Adrenal gland (tissue), 19 donors: ENCODE measurements at regions of chr14 and their contacts with region 1.

Region 1: DNA sequence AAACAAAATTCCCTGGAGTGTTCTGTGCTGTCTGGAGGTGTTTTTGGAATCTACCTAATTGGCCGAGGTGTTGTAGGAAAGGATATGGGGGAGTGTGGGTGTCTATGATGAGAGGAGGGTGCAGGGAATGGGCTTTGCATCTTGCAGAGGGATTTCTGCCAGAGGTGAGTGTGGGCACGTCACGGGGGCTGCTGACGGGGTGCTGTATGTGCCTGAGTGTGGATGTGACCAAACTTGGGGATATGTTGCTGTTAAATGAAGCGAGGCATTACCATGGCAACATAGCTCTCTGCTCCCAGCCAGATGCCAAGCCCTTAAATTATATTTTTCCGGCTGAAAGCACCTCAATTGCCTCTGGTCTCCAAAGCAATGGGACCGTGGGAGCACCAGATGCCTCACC is 44.3 kb upstream of the SPTLC2 start:
- DNase-seq: peak in 1 of 7 donors; percentile 35
- H3K4me3 ChIP-seq: no peak overlapping the region
- H3K27ac ChIP-seq: no peak overlapping the region
- H3K4me1 ChIP-seq: peaks cover 0 to 7% of the 10 kb centered on the region in 2 donors
- H3K27me3 ChIP-seq: no peaks in the 10 kb centered on the region
- CTCF ChIP-seq: no peak
- POLR2A ChIP-seq: no peak

Region 2: DNA sequence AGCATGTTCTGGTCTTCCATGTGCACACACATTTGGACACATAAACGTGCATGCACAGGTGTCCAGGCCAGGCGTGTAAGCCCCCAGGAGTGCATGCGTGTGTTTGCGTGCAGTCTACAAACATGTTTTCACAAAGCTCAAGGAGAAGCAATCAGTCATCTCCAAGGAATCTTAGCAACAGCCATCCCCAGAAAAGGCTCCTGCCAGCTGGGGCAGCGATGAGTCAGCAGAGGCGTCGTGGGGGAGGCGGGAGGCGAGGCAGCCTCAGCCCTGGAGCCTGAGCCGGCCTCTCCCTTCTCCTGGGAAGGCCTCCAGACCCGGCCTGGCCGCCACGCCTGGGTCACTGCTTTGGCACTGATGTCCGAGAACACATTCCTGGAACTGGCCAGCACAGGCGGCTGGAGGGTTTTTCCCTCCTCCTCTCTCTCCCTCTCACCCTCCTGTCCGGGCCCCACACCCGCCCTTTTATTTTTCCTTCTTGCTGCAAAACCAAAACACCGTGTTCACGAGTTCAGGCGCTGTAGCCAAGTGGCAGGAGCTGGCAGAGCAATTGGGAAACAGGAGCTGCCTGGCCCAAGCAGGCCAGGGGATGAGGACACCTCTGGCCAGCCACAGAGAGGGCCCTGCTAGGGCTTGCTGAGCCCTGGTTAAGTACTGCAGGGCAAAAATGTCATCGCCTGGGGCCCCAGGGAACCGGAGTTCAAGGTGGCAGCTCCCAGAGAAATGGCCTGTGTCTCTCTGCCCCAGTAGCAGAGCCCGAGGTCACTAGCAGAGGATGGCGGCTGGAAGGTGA is 741.8 kb before region 1 on chr14:
- intact Hi-C with region 1: no loop called
- DNase-seq: peak; percentile 94 to 98 (median 97)
- H3K4me3 ChIP-seq: no peak overlapping the region
- H3K27ac ChIP-seq: peak overlapping the region; percentile 73 to 96 (median 92)
- H3K4me1 ChIP-seq: peaks cover 37 to 63% of the 10 kb centered on the region in 2 donors
- H3K27me3 ChIP-seq: no peaks in the 10 kb centered on the region
- CTCF ChIP-seq: peak in 4 of 6 experiments; percentile 18 to 34 (median 30)
- POLR2A ChIP-seq: peak in 1 of 2 donors; percentile 70

Region 3: DNA sequence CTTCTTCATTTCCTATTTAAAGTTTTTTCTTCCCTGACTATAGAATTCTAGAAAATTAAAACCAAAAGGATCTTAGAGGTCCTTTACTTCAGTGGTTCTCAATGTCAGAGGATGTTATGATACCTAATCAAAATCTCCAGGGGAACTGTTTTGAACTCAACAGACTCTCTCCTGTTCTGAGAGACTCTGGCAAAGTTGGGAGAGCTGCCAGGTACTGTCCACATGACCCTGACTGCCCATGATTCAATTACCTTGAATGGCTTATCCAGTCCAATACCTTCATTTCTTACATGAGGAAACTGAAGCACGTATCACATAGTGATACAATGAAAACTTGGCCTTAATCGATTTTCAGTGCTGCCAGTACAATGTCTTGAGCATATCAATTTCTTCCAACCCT is 30.5 kb after region 1 on chr14:
- intact Hi-C with region 1: loop called in 1 of 2 experiments (anchors 5 kb)
- DNase-seq: peak; percentile 67 to 90 (median 77)
- H3K4me3 ChIP-seq: no peak overlapping the region
- H3K27ac ChIP-seq: no peak overlapping the region
- H3K4me1 ChIP-seq: no peaks in the 10 kb centered on the region
- H3K27me3 ChIP-seq: no peaks in the 10 kb centered on the region
- CTCF ChIP-seq: no peak
- POLR2A ChIP-seq: no peak

Region 4: GRCh38 chr14:77707724-77708408 is 47.1 kb after region 1 on chr14 and contains the starts of genes ALKBH1 and SLIRP:
- intact Hi-C with region 1: loop called in 1 of 2 experiments (anchors 5 kb)
- DNase-seq: peak; percentile 81 to 94 (median 89)
- H3K4me3 ChIP-seq: peak within 1 kb of the TSS; percentile 73 to 98 (median 89)
- H3K27ac ChIP-seq: peak within 1 kb of the TSS in 3 of 5 donors; percentile 41 to 64 (median 62)
- H3K4me1 ChIP-seq: peaks cover 9 to 31% of the 10 kb centered on the region in 2 donors
- H3K27me3 ChIP-seq: no peaks in the 10 kb centered on the region
- CTCF ChIP-seq: no peak
- POLR2A ChIP-seq: peak in 1 of 2 donors; percentile 60
- total RNA-seq, gene ALKBH1: 6.7 to 18.0 (median 12.1) TPM
- total RNA-seq, gene SLIRP: 70.6 to 744 (median 108) TPM